ENCODE measurements at regions of chr3 and their contacts with region 1.

Region 1: GRCh38 chr3:52278510-52279069 is at the start of gene WDR82:
- H3K4me3 Mint-ChIP-seq: peak within 1 kb of the TSS; percentile 91
- H3K27ac Mint-ChIP-seq: peak within 1 kb of the TSS; percentile 91
- H3K4me1 Mint-ChIP-seq: peaks cover 64% of the 10 kb centered on the region
- H3K27me3 Mint-ChIP-seq: no peaks in the 10 kb centered on the region

Region 2: DNA sequence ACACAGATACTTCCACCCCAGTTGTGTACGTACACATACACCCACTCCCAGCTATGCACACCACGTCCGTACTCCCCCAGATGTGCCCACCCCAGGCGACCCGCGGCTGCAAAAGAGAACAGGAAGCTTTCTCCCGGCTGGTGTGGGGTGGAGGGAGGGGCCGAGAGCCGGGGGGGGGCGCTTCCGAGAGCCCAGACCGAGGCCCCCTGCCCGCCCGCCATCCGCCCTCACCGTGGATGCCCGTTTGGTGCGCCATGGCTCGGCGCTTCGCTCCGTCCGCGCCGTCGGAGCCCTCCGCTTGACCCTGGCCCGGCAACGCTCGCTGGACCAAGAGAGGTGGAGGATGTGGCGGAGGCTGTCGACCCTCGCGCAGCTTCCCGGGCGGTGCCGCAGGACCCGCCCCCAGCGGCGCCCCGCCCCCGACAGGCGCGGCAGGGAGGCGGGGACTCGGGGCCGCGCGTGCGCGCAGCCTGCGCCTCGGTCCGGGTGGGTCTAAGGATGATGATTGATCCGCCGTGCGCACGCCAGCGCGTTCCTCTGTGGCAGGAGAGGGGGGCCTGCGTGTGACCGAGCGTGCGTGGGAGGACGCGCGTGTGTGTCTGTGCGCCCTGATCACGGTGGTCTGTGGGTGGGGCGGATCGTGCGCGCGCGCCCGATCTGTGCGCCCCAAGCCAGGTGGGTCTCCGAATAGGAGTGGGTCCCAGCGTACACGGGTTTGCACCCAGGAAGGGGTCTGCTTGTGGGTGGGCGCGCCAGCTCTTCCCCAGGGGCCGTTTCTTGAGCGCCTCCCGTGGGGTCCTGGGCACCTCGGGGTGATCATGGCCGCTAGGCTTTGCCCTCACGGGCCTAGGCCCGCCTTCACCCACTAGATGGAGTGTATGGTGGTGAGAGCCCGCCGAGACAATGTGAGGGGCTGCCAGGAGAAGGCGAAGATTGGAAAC is 39.6 kb before region 1 on chr3 and contains the start of gene TWF2:
- intact Hi-C with region 1: loop called (anchors 5 kb)
- H3K4me3 Mint-ChIP-seq: peak within 1 kb of the TSS; percentile 91
- H3K27ac Mint-ChIP-seq: peak within 1 kb of the TSS; percentile 97
- H3K4me1 Mint-ChIP-seq: peaks cover 84% of the 10 kb centered on the region
- H3K27me3 Mint-ChIP-seq: no peaks in the 10 kb centered on the region

Measured in dendritic cell treated with granulocyte-macrophage colony-stimulating factor and Interleukin-4, amounts not matched to agents 40 ng/mL and 50 ng/mL, for 4 days (primary cell).